Activated CD4-positive, alpha-beta T cell treated with anti-CD3 and anti-CD28 coated beads, Interleukin-2, amount 10 ng/mL, durations not matched to agents 24 days and 14 days (primary cell): ENCODE measurements at regions of chr4 and their contacts with region 1.

Region 1: GRCh38 chr4:26885912-26886274 is 25.3 kb downstream of the STIM2 start:
- DNase-seq: peak; percentile 87
- H3K4me3 Mint-ChIP-seq: peak overlapping the region; percentile 72
- H3K27ac Mint-ChIP-seq: peak overlapping the region; percentile 87
- H3K4me1 Mint-ChIP-seq: peaks cover 53% of the 10 kb centered on the region
- H3K27me3 Mint-ChIP-seq: no peaks in the 10 kb centered on the region

Region 2: DNA sequence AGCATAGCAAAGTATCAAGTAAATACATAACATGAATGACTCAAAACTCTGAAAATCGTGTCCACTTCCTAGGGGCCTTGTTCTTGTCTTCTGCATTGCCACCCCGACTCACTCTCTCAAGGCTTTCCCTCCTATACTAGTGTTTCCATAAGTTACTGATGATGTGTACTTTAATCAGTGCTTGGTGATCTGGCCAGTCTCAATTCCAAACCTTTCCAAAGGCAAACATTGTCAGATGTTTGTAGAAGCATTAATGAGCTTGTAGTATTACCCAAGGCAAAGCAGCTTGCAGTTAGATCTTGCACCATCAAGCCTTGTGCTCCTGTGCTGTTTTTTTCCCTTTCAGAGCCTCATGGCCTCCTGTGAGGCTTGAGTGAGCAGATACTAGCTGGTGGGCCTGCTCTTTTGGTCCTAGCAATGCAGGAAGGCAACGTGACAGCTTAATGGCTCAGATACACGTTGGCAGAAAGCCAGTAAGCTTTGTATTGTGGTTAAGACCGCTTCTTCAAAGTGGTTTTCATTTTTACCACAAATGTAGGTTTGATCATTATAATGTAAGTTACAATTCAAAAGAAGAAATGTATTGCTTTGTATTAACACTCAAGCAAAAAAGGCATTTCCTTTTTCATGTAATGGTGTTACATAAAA is 513.2 kb before region 1 on chr4:
- intact Hi-C with region 1: loop called (anchors 10 kb)
- DNase-seq: peak; percentile 87
- H3K4me3 Mint-ChIP-seq: peak overlapping the region; percentile 17
- H3K27ac Mint-ChIP-seq: peak overlapping the region; percentile 63
- H3K4me1 Mint-ChIP-seq: peaks cover 62% of the 10 kb centered on the region
- H3K27me3 Mint-ChIP-seq: no peaks in the 10 kb centered on the region

Region 3: DNA sequence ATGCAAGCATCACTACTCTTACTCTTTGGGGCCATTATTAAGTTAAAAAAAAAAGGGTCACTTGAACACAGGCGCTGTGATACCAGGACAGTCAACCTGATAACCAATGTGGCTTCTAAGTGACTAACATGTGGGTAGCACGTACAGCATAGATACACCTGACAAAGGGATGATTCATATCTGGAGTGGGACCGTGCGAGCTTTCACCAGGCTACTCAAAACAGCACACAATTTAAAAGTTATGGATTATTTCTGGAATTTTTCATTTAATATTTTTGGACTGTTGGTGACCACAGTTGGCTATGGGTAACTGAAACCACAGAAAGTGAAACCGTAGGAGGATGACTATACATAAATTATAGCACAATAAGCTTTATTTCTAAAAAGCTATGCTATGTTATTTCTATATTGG is 139.1 kb before region 1 on chr4:
- intact Hi-C with region 1: no loop called
- DNase-seq: peak; percentile 69
- H3K4me3 Mint-ChIP-seq: no peak overlapping the region
- H3K27ac Mint-ChIP-seq: no peak overlapping the region
- H3K4me1 Mint-ChIP-seq: peaks cover 13% of the 10 kb centered on the region
- H3K27me3 Mint-ChIP-seq: peaks cover 17% of the 10 kb centered on the region

Region 4: GRCh38 chr4:26896636-26897035 is 10.7 kb after region 1 on chr4:
- intact Hi-C with region 1: loop called (anchors 1 kb)
- DNase-seq: no peak
- H3K4me3 Mint-ChIP-seq: no peak overlapping the region
- H3K27ac Mint-ChIP-seq: no peak overlapping the region
- H3K4me1 Mint-ChIP-seq: peaks cover 38% of the 10 kb centered on the region
- H3K27me3 Mint-ChIP-seq: no peaks in the 10 kb centered on the region

Region 5: DNA sequence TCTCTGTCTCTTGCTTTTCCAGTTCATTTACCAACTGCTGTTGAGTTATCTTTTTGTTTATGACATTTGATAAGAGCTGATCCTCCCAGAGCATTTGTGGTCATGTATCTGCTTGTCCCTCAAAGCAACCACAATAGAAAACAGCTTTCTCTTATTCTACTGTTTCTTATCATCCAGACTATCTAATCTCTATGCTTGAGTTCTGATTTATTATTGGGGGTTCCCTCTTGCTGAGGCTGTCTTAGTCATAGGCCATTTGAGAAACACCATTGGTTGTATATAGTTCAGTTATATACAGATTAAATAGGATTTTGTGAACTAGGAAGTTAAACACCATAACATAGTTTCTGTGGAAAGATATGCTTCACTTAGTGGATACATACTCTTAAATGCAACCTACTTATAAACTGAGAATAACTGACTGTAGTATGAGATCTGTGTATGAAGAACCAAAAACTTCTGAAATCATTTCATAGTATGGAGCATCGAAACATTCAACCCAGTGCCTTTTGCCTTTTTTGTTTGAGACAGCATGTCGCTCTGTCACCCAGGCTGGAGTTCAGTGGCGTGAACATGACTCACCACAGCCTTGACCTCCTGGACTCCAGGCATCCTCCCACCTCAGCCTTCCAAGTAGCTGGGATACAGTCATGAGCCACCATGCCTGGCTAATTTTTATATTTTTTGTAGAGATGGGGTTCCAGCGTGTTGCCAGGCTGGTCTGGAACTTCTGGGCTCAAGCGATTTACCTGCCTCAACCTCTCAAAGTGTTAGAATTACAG is 50.6 kb after region 1 on chr4:
- intact Hi-C with region 1: no loop called
- DNase-seq: no peak
- H3K4me3 Mint-ChIP-seq: no peak overlapping the region
- H3K27ac Mint-ChIP-seq: no peak overlapping the region
- H3K4me1 Mint-ChIP-seq: peaks cover 25% of the 10 kb centered on the region
- H3K27me3 Mint-ChIP-seq: no peaks in the 10 kb centered on the region

Region 6: DNA sequence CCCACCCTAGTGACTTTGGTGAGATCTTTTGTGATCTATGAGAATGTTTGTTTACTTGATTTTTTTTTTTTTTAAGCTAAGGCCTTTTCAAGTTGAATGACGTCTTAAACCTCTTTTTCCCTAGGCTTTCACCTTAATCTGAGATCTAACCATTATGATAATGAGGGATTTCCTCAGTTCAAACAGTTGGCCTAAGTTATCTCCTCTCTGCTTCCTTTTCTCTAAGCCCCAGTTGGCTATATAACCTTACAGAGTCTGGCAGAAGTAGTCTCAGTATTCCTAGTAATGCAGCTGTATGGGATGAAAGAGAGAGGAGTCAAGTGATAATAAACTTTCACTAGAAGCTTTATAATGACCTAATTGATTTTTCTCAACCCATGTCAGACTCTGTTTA is 73.8 kb after region 1 on chr4:
- intact Hi-C with region 1: loop called (anchors 2 kb)
- DNase-seq: no peak
- H3K4me3 Mint-ChIP-seq: peak overlapping the region; percentile 20
- H3K27ac Mint-ChIP-seq: peak overlapping the region; percentile 71
- H3K4me1 Mint-ChIP-seq: peaks cover 33% of the 10 kb centered on the region
- H3K27me3 Mint-ChIP-seq: no peaks in the 10 kb centered on the region

Region 7: GRCh38 chr4:27678027-27678426 is 792.1 kb after region 1 on chr4:
- intact Hi-C with region 1: no loop called
- DNase-seq: no peak
- H3K4me3 Mint-ChIP-seq: no peak overlapping the region
- H3K27ac Mint-ChIP-seq: no peak overlapping the region
- H3K4me1 Mint-ChIP-seq: no peaks in the 10 kb centered on the region
- H3K27me3 Mint-ChIP-seq: no peaks in the 10 kb centered on the region